ENCODE measurements at regions of chr6 and their contacts with region 1.

Region 1: DNA sequence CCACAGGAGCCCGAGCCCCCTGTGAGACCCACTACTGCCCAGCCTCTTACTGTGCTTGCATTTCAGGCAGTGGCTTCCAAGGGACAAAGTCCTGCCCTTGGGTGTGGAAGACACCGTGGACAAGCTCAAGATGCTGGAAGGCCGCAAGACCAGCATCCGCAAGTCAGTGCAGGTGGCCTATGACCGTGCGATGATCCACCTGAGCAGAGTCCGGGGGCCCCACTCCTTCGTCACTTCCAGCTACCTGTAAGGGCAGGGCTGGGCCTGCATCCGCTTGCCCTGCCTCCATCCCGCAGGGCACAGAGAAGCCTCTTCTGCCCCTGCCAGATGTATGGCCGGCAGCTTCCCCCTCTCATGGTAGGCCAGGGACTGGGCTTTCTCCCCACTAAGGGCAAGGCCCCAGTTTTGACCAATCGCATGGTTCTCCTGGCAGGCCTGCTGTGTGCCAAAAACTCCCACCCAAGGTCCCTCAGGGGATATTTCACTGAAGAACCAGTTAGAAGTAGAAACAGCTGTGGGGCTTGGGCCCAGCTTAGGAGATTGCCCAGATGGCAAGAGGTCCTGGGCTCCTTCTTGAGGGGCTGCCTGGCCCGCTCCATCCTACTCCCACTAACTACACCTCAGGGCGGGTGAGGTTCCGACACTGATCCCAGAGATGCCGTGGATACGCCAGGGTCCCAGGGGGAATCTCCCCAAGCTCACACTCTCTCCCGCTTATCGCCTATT is 34.0 kb downstream of the BRPF3 start:
- DNase-seq: no peak
- ATAC-seq: no peak
- H3K4me3 ChIP-seq: no peak overlapping the region
- H3K27ac ChIP-seq: no peak overlapping the region
- H3K4me1 ChIP-seq: peaks cover 0 to 13% of the 10 kb centered on the region in 2 experiments; a peak in 4 of 5 replicates
- H3K27me3 ChIP-seq: no peaks in the 10 kb centered on the region
- CTCF ChIP-seq: no peak
- EP300 ChIP-seq: no peak
- POLR2A ChIP-seq: no peak
- RAD21 ChIP-seq: no peak

Region 2: DNA sequence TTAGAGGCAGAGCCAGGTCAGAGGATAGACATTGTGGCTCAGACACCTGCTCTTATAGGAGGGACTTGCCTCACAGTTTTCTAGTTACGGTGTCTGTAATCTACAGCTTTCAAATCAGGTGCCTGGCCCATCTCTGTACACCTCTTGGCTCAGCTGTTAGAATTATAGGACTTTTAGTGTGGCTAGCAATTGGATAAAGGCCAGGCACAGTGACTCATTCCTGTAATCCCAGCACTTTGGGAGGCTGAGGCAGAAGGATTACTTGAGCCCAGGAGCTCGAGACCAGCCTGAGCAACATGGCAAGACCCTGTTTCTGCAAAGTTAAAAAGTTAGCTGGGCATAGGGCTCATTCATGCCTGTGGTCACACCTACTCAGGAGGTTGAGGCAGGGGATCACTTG is 14.0 kb before region 1 on chr6:
- CTCF ChIA-PET with region 1: no interaction called
- POLR2A ChIA-PET with region 1: interaction called, 14 read pairs
- in situ Hi-C with region 1: no loop called
- intact Hi-C with region 1: no loop called
- DNase-seq: peak in 1 of 4 experiments; percentile 28
- ATAC-seq: peak; percentile 11
- H3K4me3 ChIP-seq: no peak overlapping the region
- H3K27ac ChIP-seq: no peak overlapping the region
- H3K4me1 ChIP-seq: peaks cover 7 to 21% of the 10 kb centered on the region in 2 experiments
- H3K27me3 ChIP-seq: no peaks in the 10 kb centered on the region
- CTCF ChIP-seq: no peak
- EP300 ChIP-seq: no peak
- POLR2A ChIP-seq: no peak
- RAD21 ChIP-seq: no peak

Region 3: DNA sequence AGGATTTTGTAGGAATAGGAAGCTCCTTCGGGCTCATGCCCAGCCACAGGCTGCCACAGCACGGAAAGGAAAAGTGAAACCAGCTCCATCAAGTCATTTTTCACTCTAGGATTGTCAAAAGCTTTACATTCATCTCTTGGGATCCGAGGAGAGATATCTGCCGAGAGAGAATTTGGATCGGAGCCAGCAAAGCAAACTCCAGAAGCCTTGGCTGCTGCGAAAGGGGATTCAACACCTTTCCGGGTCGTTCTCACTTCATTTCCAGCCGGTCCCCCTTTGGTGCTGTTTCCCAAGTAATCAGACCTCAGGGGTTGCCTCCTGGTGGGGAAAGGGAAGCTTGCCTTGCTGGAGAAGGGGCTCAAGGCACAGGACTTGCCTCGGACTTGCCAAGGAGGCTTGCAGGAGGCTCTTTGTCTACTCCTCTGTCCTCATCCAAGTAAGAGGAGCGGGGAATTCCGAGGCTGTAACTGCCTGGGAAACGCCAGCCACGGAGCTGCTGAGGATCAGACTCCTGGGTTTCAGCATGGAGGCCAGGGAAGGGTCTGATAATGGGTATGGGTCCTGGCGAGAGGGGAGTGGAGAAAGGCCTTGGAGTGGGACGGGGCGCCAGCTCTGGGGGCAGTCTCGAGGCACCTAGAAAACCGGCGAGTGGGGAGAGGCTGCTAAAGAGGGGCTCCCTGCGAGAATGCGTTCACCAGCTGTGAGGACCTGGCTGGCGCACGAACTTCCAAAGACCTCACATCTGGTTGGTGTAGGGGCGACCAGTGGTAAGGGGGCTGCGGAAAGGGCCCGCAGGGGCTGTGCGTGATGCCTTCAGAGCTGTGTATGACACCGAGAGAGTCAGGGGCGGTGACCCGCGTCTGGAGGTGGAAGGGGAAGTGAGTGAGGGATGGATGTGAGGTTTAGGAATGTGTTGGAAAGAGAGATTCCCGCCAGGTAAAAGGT is 156.2 kb after region 1 on chr6:
- CTCF ChIA-PET with region 1: no interaction called
- POLR2A ChIA-PET with region 1: no interaction called
- in situ Hi-C with region 1: no loop called
- intact Hi-C with region 1: no loop called
- DNase-seq: peak in 2 of 4 experiments; percentile 26 to 43
- ATAC-seq: peak; percentile 31
- H3K4me3 ChIP-seq: no peak overlapping the region
- H3K27ac ChIP-seq: no peak overlapping the region
- H3K4me1 ChIP-seq: peaks cover 0 to 17% of the 10 kb centered on the region in 2 experiments; a peak in 2 of 5 replicates
- H3K27me3 ChIP-seq: peaks cover 44 to 53% of the 10 kb centered on the region in 2 experiments
- CTCF ChIP-seq: no peak
- EP300 ChIP-seq: no peak
- POLR2A ChIP-seq: no peak
- RAD21 ChIP-seq: no peak